Endothelial cell of umbilical vein (primary cell): ENCODE measurements at regions of chr13 and their contacts with region 1.

Region 1: GRCh38 chr13:26186118-26186870 is 35.8 kb downstream of the RNF6 start:
- DNase-seq: peak; percentile 92
- H3K4me3 ChIP-seq: peak overlapping the region; percentile 40 to 83 (median 71)
- H3K27ac ChIP-seq: no peak overlapping the region
- H3K4me1 ChIP-seq: peaks cover 11% of the 10 kb centered on the region
- H3K27me3 ChIP-seq: peaks cover 0 to 3% of the 10 kb centered on the region in 2 experiments
- CTCF ChIP-seq: peak; percentile 43 to 68
- POLR2A ChIP-seq: peak; percentile 51

Region 2: DNA sequence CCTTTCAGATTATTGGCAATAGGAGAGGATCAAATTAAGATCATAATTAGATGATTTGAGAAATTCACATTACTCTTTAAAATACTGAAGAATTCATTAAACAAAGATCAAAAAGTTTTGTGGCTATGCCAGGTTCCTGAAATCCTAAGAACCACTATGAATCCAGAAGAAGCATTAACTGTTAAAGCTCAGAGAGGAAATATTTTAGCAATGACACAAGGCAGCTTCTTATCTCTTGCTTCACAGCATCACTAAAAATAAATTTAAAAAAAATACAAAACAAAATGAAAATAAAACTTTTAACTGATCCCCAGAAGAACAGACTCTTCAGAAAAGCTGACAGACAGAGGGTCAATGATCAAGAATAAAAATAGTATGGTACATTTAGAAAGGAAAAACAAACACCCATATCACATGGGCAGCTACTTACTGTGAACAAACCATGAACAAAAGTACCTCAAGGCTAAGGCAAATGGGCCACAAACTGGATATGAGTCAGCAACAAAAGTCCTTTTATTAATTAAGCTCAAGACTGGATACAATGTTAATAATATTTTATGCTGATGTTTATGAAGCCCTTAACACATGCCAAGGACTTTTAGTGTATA is 16.2 kb after region 1 on chr13:
- CTCF ChIA-PET with region 1: interaction called, 12 read pairs
- POLR2A ChIA-PET with region 1: no interaction called
- dilution Hi-C with region 1: no loop called
- intact Hi-C with region 1: no loop called
- DNase-seq: peak; percentile 44
- H3K4me3 ChIP-seq: no peak overlapping the region
- H3K27ac ChIP-seq: no peak overlapping the region
- H3K4me1 ChIP-seq: peaks cover 6% of the 10 kb centered on the region
- H3K27me3 ChIP-seq: no peaks in the 10 kb centered on the region
- CTCF ChIP-seq: no peak
- POLR2A ChIP-seq: no peak

Region 3: DNA sequence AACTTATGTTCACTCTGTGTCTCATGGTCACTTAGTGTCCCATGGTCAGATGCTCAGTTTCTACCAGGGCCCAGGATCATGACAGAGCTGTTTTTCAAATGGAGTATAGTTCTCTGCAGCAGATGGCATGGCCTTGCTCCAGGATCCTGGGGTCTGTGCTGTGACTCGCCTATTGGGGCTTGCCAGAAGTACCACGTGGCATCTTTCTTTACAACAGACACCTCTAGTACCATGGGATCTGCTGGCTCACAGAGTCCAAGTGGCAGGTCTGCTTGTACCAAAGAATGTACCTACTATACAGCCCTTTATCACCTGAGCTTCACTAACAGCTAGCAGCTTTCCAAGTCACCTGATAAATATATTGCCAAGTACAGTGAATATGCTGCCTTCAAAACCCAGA is 41.8 kb after region 1 on chr13:
- CTCF ChIA-PET with region 1: interaction called, 11 read pairs
- POLR2A ChIA-PET with region 1: interaction called, 7 read pairs
- dilution Hi-C with region 1: no loop called
- intact Hi-C with region 1: loop called (anchors 1 kb)
- DNase-seq: no peak
- H3K4me3 ChIP-seq: no peak overlapping the region
- H3K27ac ChIP-seq: no peak overlapping the region
- H3K4me1 ChIP-seq: no peaks in the 10 kb centered on the region
- H3K27me3 ChIP-seq: peaks cover 2 to 15% of the 10 kb centered on the region in 2 experiments
- CTCF ChIP-seq: no peak
- POLR2A ChIP-seq: no peak

Region 4: GRCh38 chr13:26482451-26483197 is 296.3 kb after region 1 on chr13:
- CTCF ChIA-PET with region 1: interaction called, 37 read pairs
- POLR2A ChIA-PET with region 1: interaction called, 3 read pairs
- dilution Hi-C with region 1: no loop called
- intact Hi-C with region 1: loop called (anchors 1 kb)
- DNase-seq: peak; percentile 79
- H3K4me3 ChIP-seq: peak overlapping the region in 1 of 3 experiments; percentile 40
- H3K27ac ChIP-seq: no peak overlapping the region
- H3K4me1 ChIP-seq: peaks cover 2% of the 10 kb centered on the region
- H3K27me3 ChIP-seq: no peaks in the 10 kb centered on the region
- CTCF ChIP-seq: peak; percentile 80 to 85
- POLR2A ChIP-seq: no peak

Region 5: GRCh38 chr13:26502826-26503225 is 316.5 kb after region 1 on chr13:
- CTCF ChIA-PET with region 1: interaction called, 195 read pairs
- POLR2A ChIA-PET with region 1: no interaction called
- dilution Hi-C with region 1: no loop called
- intact Hi-C with region 1: no loop called
- DNase-seq: peak; percentile 58
- H3K4me3 ChIP-seq: no peak overlapping the region
- H3K27ac ChIP-seq: no peak overlapping the region
- H3K4me1 ChIP-seq: peaks cover 7% of the 10 kb centered on the region
- H3K27me3 ChIP-seq: no peaks in the 10 kb centered on the region
- CTCF ChIP-seq: peak in 1 of 2 donors; percentile 29
- POLR2A ChIP-seq: no peak

Region 6: DNA sequence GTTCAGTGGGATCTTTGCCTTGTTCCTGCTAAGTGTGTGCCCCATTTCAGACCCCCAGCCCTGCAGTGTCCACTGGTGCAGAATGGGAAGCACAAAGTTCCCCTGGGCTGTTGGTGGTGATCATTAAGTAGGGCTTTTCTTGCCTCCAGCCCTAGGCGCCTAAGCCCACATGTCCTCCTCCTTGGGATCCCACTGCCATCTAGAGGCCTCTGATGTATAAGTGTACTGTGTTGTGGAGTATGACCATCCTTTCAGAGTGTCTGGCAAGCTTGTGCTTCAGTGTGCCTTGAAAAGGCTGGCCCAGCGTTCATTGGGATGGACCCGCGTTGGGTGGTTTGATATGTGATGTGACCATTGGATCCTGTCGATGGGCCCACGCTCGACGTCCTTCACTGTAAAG is 442.4 kb after region 1 on chr13:
- CTCF ChIA-PET with region 1: interaction called, 20 read pairs
- POLR2A ChIA-PET with region 1: no interaction called
- dilution Hi-C with region 1: no loop called
- intact Hi-C with region 1: loop called (anchors 1 kb)
- DNase-seq: peak; percentile 38
- H3K4me3 ChIP-seq: no peak overlapping the region
- H3K27ac ChIP-seq: no peak overlapping the region
- H3K4me1 ChIP-seq: no peaks in the 10 kb centered on the region
- H3K27me3 ChIP-seq: no peaks in the 10 kb centered on the region
- CTCF ChIP-seq: peak; percentile 16 to 26
- POLR2A ChIP-seq: no peak

Region 7: DNA sequence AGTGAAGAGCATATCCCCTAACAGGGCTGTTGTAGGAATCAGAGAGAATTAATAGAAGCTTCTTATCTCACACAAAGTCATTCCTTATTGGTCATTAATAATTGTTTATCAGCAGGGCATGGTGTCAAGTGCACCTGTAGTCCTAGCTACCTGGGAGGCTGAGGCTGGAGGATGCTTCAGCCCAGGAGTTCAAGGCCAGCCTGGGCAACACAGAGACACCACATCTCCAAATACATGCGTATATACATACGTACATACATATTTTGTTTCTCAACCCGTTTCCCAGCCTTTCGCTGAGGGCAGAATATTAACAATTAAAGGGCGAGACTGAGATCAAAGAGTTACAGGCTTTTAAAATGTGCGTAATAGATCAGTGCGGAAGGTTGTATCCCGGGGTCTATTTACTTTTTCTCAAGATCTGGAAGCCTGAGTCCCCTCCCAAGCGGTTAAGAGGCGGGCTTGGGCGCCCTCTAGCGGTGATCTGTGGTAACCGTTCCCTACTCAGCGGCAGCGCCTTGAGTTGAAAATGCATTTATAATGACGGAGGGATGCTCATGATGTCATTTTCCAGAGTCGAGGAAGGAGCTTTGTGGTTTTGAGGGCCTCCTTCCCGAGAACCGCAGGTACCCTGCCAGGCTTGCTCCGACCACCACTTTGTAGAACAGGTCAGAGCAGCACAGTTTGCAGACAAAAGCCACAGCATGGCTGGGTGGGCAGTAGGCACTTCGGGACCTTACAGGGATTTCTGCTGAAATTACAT is 743.9 kb after region 1 on chr13:
- CTCF ChIA-PET with region 1: interaction called, 12 read pairs
- POLR2A ChIA-PET with region 1: no interaction called
- dilution Hi-C with region 1: no loop called
- intact Hi-C with region 1: loop called (anchors 1 kb)
- DNase-seq: peak; percentile 67
- H3K4me3 ChIP-seq: no peak overlapping the region
- H3K27ac ChIP-seq: no peak overlapping the region
- H3K4me1 ChIP-seq: no peaks in the 10 kb centered on the region
- H3K27me3 ChIP-seq: peaks cover 3% of the 10 kb centered on the region in 2 experiments
- CTCF ChIP-seq: peak; percentile 89 to 95
- POLR2A ChIP-seq: no peak